ENCODE measurements at regions of chr5 and their contacts with region 1.

Region 1: DNA sequence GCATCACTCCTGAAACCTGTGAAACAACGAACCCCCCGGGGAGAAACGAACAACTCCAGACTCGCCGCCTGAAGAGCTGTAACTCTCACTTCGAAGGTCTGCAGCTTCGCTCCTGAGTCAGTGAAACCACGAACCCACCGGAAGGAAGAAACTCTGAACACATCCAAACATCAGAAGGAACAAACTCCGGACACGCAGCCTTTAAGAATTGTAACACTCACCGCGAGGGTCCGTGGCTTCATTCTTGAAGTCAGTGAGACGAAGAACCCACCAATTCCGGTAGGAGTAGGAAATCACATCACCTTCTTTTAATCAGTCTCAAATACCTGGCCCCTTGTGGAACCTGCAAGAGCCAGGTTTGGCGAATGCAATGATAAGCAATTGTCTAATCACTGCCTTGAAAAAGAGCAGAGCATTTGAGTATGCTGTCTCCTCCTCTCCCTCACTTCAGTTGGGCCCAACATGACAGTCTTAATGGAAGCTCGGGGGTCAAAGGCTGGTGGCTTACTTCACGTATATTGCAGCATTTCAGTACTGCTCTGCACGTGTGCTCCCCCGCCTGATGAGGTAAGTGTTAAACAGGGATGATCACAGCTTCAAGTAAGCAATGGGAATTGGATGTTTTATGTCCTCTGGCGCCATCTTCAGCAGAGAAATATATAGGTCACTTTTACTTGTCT is 473 bp downstream of the IRGM start:
- DNase-seq: peak; percentile 26 to 34
- H3K4me3 ChIP-seq: no peak overlapping the region
- H3K27ac ChIP-seq: no peak overlapping the region
- H3K4me1 ChIP-seq: no peaks in the 10 kb centered on the region
- H3K27me3 ChIP-seq: no peaks in the 10 kb centered on the region
- CTCF ChIP-seq: peak in 5 of 6 experiments; percentile 21 to 80 (median 62)
- POLR2A ChIP-seq: no peak

Region 2: DNA sequence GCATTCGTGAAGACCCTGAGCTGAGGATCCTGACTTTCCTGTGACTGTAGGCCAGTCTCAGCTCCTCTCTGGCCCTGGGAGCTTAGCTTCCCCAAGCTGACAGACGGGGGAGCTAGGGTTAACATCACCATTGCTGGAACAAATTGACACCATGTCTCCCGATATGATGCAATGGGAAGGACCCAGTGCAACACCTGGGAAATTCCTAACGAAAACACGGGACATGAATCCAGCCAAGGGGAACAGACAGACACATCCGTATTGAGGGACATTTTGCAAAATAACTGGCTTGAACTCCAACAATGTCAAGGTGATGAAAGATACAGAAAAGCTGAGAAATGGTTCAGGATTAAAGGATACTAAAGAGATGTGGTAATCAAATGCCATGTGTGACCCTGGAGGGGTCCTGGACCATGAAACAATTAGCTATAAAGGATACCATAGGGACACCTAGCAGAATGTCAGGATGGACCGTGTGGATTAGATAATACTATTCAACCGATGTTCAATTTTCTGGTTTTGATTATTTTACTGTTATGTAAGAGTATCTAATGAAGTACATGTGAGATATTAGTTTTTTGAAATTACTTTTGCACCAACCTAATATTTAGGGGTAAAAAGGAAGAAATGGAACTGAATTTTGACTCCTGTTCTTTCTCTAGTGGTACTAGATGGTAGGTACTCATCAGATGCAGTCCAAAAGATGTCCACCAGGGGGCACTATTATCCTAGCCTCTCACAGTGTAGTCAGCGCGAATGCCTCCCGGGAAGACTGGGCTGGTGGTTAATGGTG is 286.2 kb before region 1 on chr5:
- intact Hi-C with region 1: loop called (anchors 5 kb)
- DNase-seq: peak; percentile 87 to 91
- H3K4me3 ChIP-seq: no peak overlapping the region
- H3K27ac ChIP-seq: no peak overlapping the region
- H3K4me1 ChIP-seq: no peaks in the 10 kb centered on the region
- H3K27me3 ChIP-seq: no peaks in the 10 kb centered on the region
- CTCF ChIP-seq: peak; percentile 79 to 95 (median 90)
- POLR2A ChIP-seq: no peak

Region 3: DNA sequence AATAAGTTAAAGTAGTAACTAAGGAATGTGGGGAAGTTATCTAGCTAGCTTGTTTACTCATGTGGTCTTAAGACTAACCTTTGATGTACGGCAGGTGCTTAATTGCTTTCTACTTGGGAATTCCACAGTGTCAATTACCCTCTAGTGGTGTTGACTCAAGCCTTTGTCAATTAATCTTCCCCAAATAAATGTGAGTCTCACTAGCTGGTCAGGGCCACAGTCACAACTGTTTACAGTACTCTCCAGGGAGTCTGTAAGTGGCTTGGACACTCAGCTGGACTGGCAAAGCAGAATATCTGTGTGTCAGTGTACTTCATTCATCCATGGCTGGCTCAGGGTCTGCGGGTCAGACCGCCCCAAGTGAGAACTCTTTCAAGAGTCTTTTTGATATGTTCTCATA is 37.4 kb before region 1 on chr5:
- intact Hi-C with region 1: loop called (anchors 5 kb)
- DNase-seq: no peak
- H3K4me3 ChIP-seq: no peak overlapping the region
- H3K27ac ChIP-seq: no peak overlapping the region
- H3K4me1 ChIP-seq: no peaks in the 10 kb centered on the region
- H3K27me3 ChIP-seq: no peaks in the 10 kb centered on the region
- CTCF ChIP-seq: no peak
- POLR2A ChIP-seq: no peak